ENCODE measurements at regions of chr1 and their contacts with region 1.

Region 1: GRCh38 chr1:246699095-246699735 is 25.0 kb upstream of the SCCPDH start:
- DNase-seq: peak; percentile 86
- ATAC-seq: peak; percentile 56
- H3K4me3 ChIP-seq: peak overlapping the region; percentile 31 to 67 (median 53)
- H3K27ac ChIP-seq: peak overlapping the region; percentile 14
- H3K4me1 ChIP-seq: peaks cover 32% of the 10 kb centered on the region
- H3K27me3 ChIP-seq: no peaks in the 10 kb centered on the region; a peak in 1 of 5 replicates
- CTCF ChIP-seq: peak; percentile 90
- EP300 ChIP-seq: no peak
- POLR2A ChIP-seq: no peak
- RAD21 ChIP-seq: peak; percentile 67

Region 2: GRCh38 chr1:246506674-246507481 is 192.3 kb before region 1 on chr1 and contains the start of gene SMYD3:
- CTCF ChIA-PET with region 1: no interaction called
- POLR2A ChIA-PET with region 1: no interaction called
- in situ Hi-C with region 1: no loop called
- intact Hi-C with region 1: loop called (anchors 5 kb)
- DNase-seq: peak; percentile 77
- ATAC-seq: peak; percentile 86
- H3K4me3 ChIP-seq: peak within 1 kb of the TSS; percentile 83 to 91 (median 88)
- H3K27ac ChIP-seq: peak within 1 kb of the TSS; percentile 38
- H3K4me1 ChIP-seq: peaks cover 36% of the 10 kb centered on the region
- H3K27me3 ChIP-seq: no peaks in the 10 kb centered on the region
- CTCF ChIP-seq: peak; percentile 53
- EP300 ChIP-seq: no peak
- POLR2A ChIP-seq: peak; percentile 40 to 82; a peak in 3 of 4 replicates
- RAD21 ChIP-seq: no peak
- total RNA-seq, gene SMYD3: 27.7 and 32.9 TPM in 2 replicates

Region 3: DNA sequence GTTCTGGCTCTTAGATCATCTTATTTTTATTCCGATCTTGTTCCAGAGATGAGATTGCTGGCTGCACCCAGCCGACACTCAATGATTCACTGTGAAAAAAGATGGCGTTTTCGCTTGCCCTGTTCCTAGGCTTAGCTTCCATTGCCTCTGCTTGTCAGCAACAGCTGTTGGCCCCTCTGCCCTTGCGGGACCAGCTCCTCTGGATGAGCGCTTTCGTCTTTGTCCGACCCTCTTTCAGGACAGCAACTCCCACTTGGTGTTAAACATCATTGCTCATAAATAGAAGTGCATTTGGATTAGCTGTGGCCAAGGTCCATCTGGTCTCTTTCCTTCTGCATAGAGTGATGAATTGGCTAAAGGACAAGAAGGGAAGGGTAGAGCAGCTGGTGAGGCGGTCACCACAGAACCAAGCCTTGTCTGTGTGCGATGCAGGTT is 18.5 kb before region 1 on chr1:
- CTCF ChIA-PET with region 1: no interaction called
- POLR2A ChIA-PET with region 1: no interaction called
- in situ Hi-C with region 1: no loop called
- intact Hi-C with region 1: no loop called
- DNase-seq: no peak
- ATAC-seq: no peak
- H3K4me3 ChIP-seq: no peak overlapping the region
- H3K27ac ChIP-seq: no peak overlapping the region
- H3K4me1 ChIP-seq: no peaks in the 10 kb centered on the region
- H3K27me3 ChIP-seq: no peaks in the 10 kb centered on the region
- CTCF ChIP-seq: no peak
- EP300 ChIP-seq: no peak
- POLR2A ChIP-seq: no peak
- RAD21 ChIP-seq: no peak

Region 4: GRCh38 chr1:246709835-246710234 is 10.6 kb after region 1 on chr1:
- CTCF ChIA-PET with region 1: no interaction called
- POLR2A ChIA-PET with region 1: interaction called, 11 read pairs
- in situ Hi-C with region 1: no loop called
- intact Hi-C with region 1: no loop called
- DNase-seq: peak; percentile 94
- ATAC-seq: peak; percentile 85
- H3K4me3 ChIP-seq: no peak overlapping the region
- H3K27ac ChIP-seq: peak overlapping the region; percentile 82
- H3K4me1 ChIP-seq: peaks cover 63% of the 10 kb centered on the region
- H3K27me3 ChIP-seq: no peaks in the 10 kb centered on the region
- CTCF ChIP-seq: no peak
- EP300 ChIP-seq: peak in 1 of 2 experiments; percentile 80; a peak in 2 of 4 replicates
- POLR2A ChIP-seq: no peak
- RAD21 ChIP-seq: no peak

Region 5: DNA sequence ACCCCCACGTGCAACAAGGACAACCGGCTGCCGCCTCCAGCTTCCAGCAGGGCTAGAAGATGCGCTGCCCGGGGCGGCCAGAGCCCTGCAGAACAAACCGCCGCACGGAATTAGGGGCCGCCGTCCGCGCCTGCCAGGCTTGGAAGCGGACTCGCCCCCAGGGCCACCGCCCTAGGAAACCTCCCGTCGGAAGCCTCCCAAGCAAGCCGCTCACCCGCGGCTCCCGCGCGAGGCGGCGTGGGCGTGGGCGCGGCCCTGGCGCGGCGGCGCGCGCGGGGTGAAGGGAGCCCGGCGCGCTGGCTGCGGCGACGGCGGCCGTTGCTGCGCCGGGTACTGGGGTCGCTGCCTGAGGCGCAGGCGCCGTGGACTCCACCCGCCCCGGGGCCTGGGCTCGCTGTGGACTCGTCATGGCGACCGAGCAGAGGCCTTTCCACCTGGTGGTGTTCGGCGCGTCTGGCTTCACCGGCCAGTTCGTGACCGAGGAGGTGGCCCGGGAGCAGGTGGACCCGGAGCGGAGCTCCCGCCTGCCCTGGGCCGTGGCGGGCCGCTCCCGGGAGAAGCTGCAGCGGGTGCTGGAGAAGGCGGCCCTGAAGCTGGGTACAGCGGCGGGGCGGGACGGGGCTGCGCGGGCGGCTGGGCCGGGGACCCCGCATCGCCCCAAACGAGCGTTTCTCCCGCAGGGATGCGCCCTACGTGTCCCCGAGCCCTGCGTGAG is 25.0 kb after region 1 on chr1 and contains the start of gene SCCPDH:
- CTCF ChIA-PET with region 1: interaction called, 3 read pairs
- POLR2A ChIA-PET with region 1: interaction called, 3 read pairs
- in situ Hi-C with region 1: no loop called
- intact Hi-C with region 1: loop called (anchors 2 kb)
- DNase-seq: peak; percentile 39
- ATAC-seq: peak; percentile 95
- H3K4me3 ChIP-seq: peak within 1 kb of the TSS; percentile 73 to 89 (median 82)
- H3K27ac ChIP-seq: peak within 1 kb of the TSS; percentile 95
- H3K4me1 ChIP-seq: peaks cover 42% of the 10 kb centered on the region
- H3K27me3 ChIP-seq: no peaks in the 10 kb centered on the region
- CTCF ChIP-seq: 0 out of 2 replicates have a peak, but pooled peaks have one; percentile 3
- EP300 ChIP-seq: no peak
- POLR2A ChIP-seq: peak; percentile 69 to 74; a peak in 3 of 4 replicates
- RAD21 ChIP-seq: peak; percentile 54; the same call in 1 of the 2 replicates
- total RNA-seq, gene SCCPDH: 62.3 and 65.6 TPM in 2 replicates

Region 6: GRCh38 chr1:246734866-246735265 is 35.7 kb after region 1 on chr1:
- CTCF ChIA-PET with region 1: no interaction called
- POLR2A ChIA-PET with region 1: no interaction called
- in situ Hi-C with region 1: no loop called
- intact Hi-C with region 1: no loop called
- DNase-seq: no peak
- ATAC-seq: no peak
- H3K4me3 ChIP-seq: no peak overlapping the region
- H3K27ac ChIP-seq: no peak overlapping the region
- H3K4me1 ChIP-seq: peaks cover 13% of the 10 kb centered on the region; the same call in 1 of the 2 replicates
- H3K27me3 ChIP-seq: no peaks in the 10 kb centered on the region
- CTCF ChIP-seq: no peak
- EP300 ChIP-seq: no peak
- POLR2A ChIP-seq: no peak
- RAD21 ChIP-seq: no peak

Region 7: DNA sequence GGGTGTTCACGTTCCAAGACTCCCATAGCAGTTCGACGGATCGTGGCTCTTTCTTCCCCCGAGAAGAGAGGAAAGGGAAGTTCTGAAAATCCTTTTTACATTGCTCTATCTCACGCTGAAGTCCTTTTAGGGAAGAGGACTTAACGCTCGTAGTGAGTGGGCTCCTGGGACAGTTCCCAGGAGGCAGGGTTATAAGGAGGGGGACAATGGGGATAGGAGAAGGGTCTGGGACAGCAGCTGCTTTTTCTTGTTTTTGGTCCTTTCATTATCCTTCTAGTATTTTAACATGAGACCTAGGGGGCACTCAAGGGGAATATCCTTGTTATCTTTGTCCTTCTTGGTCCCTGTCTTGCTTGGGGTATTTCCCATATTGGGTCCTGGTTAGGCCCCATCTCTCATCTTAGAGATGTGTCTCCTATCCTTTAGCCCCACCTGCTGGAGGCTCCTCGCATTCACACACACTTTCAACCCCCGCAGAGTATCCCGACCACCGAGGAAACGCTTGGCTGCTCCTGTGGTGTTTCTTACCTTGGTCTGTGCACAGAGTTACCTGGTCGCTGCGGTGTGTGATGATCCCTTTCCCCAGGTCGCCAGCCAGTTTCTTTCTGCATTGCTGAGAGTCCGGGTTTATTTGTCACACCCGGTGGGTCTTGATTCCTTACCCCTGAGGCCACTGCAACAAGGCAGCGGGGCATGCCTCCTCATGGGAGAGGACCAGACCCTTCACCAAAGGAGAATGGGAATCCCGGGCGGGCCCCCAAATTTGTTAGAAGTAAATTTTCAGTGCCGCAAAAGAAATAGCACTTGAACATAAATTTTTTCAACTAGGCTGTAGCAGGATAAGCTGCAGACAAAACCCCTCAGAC is 54.7 kb after region 1 on chr1:
- CTCF ChIA-PET with region 1: interaction called, 3 read pairs
- POLR2A ChIA-PET with region 1: no interaction called
- in situ Hi-C with region 1: loop called (anchors 5 kb)
- intact Hi-C with region 1: loop called (anchors 2 kb)
- DNase-seq: peak; percentile 50
- ATAC-seq: peak; percentile 98
- H3K4me3 ChIP-seq: no peak overlapping the region
- H3K27ac ChIP-seq: no peak overlapping the region
- H3K4me1 ChIP-seq: no peaks in the 10 kb centered on the region
- H3K27me3 ChIP-seq: no peaks in the 10 kb centered on the region
- CTCF ChIP-seq: peak; percentile 84
- EP300 ChIP-seq: no peak
- POLR2A ChIP-seq: no peak
- RAD21 ChIP-seq: peak; percentile 87